GM13977 (cell line): ENCODE measurements at regions of chr12 and their contacts with region 1.

Region 1: DNA sequence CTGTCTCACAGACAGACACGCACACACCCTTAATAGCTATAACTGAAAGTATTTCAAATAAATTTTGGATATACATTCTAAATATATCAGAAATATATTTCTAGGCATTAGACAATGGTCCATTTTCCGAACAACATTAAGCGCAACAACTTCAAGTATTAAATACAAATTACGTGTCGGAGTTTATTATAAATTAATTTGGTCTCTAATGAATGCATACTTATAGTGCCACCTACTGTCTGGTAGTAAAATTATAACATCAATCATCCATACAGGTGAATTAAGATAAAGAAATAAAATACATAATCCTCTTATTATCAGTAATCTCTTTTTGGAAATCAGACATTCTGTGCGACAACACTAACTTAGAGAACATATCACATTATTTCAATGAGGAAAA is 27.2 kb upstream of the CMAS start:
- DNase-seq: no peak
- CTCF ChIP-seq: peak; percentile 23

Region 2: DNA sequence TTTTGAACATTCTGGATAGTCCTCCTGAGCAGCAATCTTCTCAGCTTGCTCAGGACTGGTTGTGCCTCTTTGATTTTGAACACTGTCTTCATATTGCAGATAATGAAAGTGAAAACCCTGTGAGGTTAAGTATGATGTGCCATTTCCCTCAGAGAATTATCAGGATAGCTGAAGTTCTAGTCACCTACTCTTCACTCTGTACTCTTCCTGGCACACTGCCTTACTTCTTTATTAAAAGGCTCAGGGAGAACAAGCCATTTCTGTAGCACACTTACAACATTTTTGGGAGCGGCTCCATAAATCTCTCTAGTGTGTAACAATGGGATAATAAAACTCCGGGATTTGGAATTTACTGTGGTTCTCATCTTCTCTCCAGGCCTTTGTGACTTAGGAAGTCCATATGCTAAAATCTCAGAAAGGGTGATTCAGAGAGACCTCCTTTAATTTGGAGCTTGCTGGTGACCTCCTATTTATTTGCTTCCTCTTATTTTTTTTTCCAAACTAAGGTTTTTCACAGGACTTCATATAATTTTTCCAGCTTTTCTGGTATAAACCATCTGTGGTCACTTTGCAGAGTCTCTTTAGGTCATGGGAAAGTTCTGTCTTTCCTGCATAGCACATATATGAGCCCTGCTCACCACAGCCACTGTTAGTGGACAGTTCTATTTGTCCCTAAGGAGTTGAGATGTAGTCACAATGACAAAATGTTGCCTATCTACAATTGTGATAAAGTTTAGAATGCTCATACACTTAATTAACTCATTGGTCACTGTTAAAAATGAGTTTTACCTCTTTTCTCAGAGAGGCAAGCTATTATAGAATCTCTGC is 307.7 kb before region 1 on chr12:
- in situ Hi-C with region 1: loop called (anchors 25 kb)
- DNase-seq: no peak
- CTCF ChIP-seq: no peak

Region 3: GRCh38 chr12:21852251-21852650 is 166.6 kb before region 1 on chr12:
- in situ Hi-C with region 1: no loop called
- DNase-seq: no peak
- CTCF ChIP-seq: no peak

Region 4: GRCh38 chr12:22101749-22102243 is 82.9 kb after region 1 on chr12:
- in situ Hi-C with region 1: no loop called
- DNase-seq: no peak
- CTCF ChIP-seq: no peak